RWPE1 (cell line): ENCODE measurements at regions of chr11 and their contacts with region 1.

Region 1: DNA sequence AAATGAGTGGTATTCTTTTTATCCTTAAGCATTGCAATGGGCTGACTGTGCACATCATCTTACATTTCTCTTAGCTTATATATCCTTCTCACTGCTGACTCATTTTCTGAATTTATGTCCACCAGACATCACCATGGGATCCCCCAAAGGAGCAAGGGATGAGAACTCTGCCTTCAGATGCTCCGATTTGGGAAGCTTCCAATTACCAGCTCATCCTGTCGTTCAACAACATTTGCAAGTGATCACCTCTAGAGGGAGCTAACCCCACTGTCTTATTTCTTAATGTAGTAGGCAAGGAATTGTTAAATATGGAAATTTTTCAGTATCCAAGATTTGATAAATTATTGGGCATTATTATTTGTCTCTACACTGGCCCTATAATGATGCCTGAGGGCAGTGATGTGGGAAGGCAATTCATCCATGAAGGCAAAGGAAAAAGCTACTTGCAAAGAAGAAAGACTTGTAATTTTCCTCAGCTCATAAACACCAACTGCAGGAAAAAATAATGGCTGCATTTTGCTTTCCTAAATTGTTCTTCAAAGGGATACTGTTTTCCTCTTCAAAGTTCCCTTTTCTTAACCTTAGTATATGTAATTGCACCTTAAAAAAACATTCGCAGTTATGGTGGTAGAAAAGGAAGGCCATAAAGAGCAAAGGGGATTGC is 102.4 kb upstream of the FSHB start:
- DNase-seq: peak; percentile 53
- H3K27ac ChIP-seq: no peak overlapping the region
- CTCF ChIP-seq: peak; percentile 68

Region 2: DNA sequence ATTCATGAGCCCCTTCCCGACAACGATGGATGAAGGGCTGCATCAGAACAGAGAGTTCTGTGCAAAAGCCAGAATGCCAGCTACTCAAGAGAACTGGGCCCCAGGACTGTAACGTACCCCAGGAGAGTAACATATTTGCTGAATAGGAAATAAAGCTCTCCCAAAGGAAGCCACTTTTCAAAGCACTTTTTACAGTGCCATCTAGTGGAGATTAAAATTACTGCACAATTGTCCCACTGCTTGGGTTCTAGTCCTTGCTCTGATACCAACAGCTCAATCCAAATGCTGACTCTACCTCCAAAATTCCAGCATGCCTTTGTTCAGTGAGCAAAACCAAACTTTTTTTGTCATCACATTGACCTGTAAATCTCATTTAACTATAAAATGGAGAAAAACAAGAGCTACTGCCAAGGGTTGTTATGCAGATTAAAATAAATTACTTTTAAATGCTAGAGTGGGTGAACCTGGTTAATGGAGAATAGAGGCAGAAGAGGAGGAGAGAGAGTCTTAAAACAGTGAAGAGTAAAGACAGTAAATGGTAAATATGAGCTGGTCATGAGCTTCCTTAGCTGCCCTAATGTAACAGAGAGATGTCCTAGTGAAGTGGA is 14.8 kb after region 1 on chr11:
- CTCF ChIA-PET with region 1: interaction called, 28 read pairs
- POLR2A ChIA-PET with region 1: no interaction called
- DNase-seq: peak; percentile 17
- H3K27ac ChIP-seq: no peak overlapping the region
- CTCF ChIP-seq: peak; percentile 80